Heart left ventricle (tissue), 16 donors: ENCODE measurements at regions of chr5 and their contacts with region 1.

Region 1: DNA sequence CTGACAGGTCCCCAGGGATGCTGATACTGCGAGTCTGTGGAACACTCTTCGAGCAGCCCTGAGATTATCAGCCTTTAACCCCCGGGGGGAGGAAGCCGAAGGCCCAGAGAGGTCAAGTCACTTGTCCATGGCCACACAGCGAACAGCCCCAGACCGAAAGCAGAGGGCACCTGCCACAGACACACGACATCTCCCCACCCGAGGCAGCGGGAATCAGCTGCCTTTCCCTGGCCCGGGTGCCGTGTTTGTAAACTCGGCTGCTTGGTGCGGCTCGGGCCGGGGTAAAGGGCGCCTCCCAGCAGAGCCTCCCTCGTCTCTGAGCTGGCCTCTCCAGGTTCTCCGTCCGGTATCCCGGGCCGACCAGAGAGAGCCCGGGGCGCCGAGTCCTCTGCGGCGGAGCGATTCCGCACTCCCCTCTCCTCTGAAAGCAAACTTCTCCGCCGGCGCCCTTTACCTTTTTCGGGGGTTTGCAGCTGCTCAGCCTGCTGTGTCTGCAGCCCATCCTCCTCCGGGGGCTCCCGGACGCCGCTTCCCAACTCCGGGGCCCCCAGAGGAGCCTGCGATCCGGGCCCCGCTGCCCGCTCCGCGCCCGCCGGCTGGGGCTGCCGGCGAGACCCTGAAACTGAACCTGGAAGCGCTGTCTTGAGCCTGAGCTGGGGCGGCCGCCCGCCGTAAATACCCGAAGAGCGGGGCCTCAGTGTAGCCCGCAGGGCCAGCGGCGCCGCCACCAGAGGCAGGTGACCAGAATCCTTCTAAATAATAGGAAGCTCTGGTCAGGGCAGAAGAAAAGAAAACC is at the start of gene CCDC69:
- DNase-seq: peak; percentile 83 to 90 (median 86)
- ATAC-seq: peak; percentile 83 to 92 (median 88)
- H3K4me3 ChIP-seq: peak within 1 kb of the TSS; percentile 68 to 95 (median 82)
- H3K27ac ChIP-seq: peak within 1 kb of the TSS; percentile 76 to 96 (median 90)
- H3K4me1 ChIP-seq: peaks cover 6 to 60% (median 43%) of the 10 kb centered on the region in 12 donors
- H3K27me3 ChIP-seq: no peaks in the 10 kb centered on the region
- CTCF ChIP-seq: peak in 7 of 12 donors; percentile 23 to 51 (median 33)
- POLR2A ChIP-seq: peak; percentile 77 to 92
- total RNA-seq, gene CCDC69: 82.5 to 207 (median 119) TPM

Region 2: GRCh38 chr5:151063142-151063949 is 160.3 kb before region 1 on chr5:
- intact Hi-C with region 1: loop called in 1 of 10 experiments (anchors 5 kb)
- DNase-seq: peak in 4 of 5 donors; percentile 55 to 73 (median 57)
- ATAC-seq: peak; percentile 75 to 79 (median 76)
- H3K4me3 ChIP-seq: peak overlapping the region in 1 of 12 donors; percentile 12
- H3K27ac ChIP-seq: peak overlapping the region; percentile 60 to 97 (median 86)
- H3K4me1 ChIP-seq: peaks cover 15 to 99% (median 82%) of the 10 kb centered on the region in 12 donors
- H3K27me3 ChIP-seq: no peaks in the 10 kb centered on the region
- CTCF ChIP-seq: peak in 1 of 12 donors; percentile 12
- POLR2A ChIP-seq: no peak

Region 3: GRCh38 chr5:151164686-151165392 is 58.8 kb before region 1 on chr5:
- intact Hi-C with region 1: loop called in 1 of 10 experiments (anchors 10 kb)
- DNase-seq: peak; percentile 60 to 76 (median 74)
- ATAC-seq: peak; percentile 87 to 92 (median 90)
- H3K4me3 ChIP-seq: no peak overlapping the region
- H3K27ac ChIP-seq: no peak overlapping the region
- H3K4me1 ChIP-seq: peaks cover 0 to 20% (median 9%) of the 10 kb centered on the region in 12 donors
- H3K27me3 ChIP-seq: no peaks in the 10 kb centered on the region
- CTCF ChIP-seq: peak; percentile 85 to 96 (median 93)
- POLR2A ChIP-seq: no peak

Region 4: GRCh38 chr5:151183451-151184245 is 40.0 kb before region 1 on chr5:
- intact Hi-C with region 1: loop called in 1 of 10 experiments (anchors 5 kb)
- DNase-seq: no peak
- ATAC-seq: no peak
- H3K4me3 ChIP-seq: no peak overlapping the region
- H3K27ac ChIP-seq: no peak overlapping the region
- H3K4me1 ChIP-seq: peaks cover 0 to 8% (median 0%) of the 10 kb centered on the region in 12 donors
- H3K27me3 ChIP-seq: no peaks in the 10 kb centered on the region
- CTCF ChIP-seq: no peak
- POLR2A ChIP-seq: no peak

Region 5: GRCh38 chr5:151384106-151384505 is 160.4 kb after region 1 on chr5:
- intact Hi-C with region 1: no loop called
- DNase-seq: no peak
- ATAC-seq: peak in 1 of 4 donors; percentile 31
- H3K4me3 ChIP-seq: no peak overlapping the region
- H3K27ac ChIP-seq: no peak overlapping the region
- H3K4me1 ChIP-seq: peaks cover 0 to 7% (median 0%) of the 10 kb centered on the region in 12 donors
- H3K27me3 ChIP-seq: peaks cover 0 to 4% (median 0%) of the 10 kb centered on the region in 9 donors
- CTCF ChIP-seq: no peak
- POLR2A ChIP-seq: no peak